Pancreas (tissue), 10 donors: ENCODE measurements at regions of chr10 and their contacts with region 1.

Region 1: DNA sequence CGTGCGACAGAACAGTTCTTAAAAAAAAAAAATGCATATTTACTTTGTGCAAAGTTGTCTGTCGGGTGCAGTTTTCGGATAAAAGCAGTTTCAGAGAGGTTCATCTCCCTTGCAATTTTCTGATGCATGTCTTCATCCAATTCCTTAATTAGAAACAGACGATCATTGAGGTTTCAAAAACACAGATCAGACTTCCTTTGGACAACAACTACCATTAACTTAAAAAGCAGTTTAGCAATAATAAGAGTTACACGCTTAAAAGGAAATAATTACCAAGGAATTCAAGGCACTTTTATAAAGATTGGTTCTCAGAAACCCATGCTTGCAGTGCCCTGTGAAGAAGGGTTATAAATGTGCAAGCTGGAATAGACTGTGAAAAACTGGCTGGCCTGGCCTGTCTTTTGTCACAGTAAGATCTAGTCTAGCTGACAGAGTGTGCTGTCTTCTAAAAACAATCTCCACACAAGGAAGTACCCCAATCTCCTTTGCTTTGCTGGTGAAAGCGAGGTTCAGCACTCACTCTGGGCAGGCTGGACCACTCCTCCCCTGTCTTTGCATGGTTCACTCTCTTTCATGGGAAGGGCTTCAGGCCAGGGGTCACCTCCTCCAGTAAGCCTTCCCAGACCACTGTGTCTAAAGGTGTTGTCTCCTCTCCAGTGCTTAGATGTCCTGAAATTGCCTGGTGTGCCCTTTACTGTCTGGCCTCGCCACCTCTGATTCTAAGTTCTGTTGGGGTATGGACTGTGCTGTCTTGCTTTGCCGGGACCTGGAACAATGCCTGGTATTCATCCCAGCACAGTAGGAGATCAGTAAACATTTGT is 34.8 kb upstream of the HNRNPH3 start:
- DNase-seq: no peak
- ATAC-seq: no peak
- H3K4me3 ChIP-seq: no peak overlapping the region
- H3K27ac ChIP-seq: no peak overlapping the region
- H3K4me1 ChIP-seq: peaks cover 0 to 18% (median 0%) of the 10 kb centered on the region in 3 donors
- H3K27me3 ChIP-seq: no peaks in the 10 kb centered on the region
- CTCF ChIP-seq: no peak

Region 2: GRCh38 chr10:68231106-68231816 is 65.8 kb before region 1 on chr10:
- intact Hi-C with region 1: loop called in 1 of 3 experiments (anchors 10 kb)
- DNase-seq: peak; percentile 52 to 86 (median 66)
- ATAC-seq: peak; percentile 97 to 99 (median 99)
- H3K4me3 ChIP-seq: peak overlapping the region; percentile 46 to 66 (median 50)
- H3K27ac ChIP-seq: peak overlapping the region; percentile 43 to 74 (median 58)
- H3K4me1 ChIP-seq: peaks cover 0 to 3% (median 0%) of the 10 kb centered on the region in 3 donors
- H3K27me3 ChIP-seq: no peaks in the 10 kb centered on the region
- CTCF ChIP-seq: no peak